B cell (primary cell): ENCODE measurements at regions of chr6 and their contacts with region 1.

Region 1: DNA sequence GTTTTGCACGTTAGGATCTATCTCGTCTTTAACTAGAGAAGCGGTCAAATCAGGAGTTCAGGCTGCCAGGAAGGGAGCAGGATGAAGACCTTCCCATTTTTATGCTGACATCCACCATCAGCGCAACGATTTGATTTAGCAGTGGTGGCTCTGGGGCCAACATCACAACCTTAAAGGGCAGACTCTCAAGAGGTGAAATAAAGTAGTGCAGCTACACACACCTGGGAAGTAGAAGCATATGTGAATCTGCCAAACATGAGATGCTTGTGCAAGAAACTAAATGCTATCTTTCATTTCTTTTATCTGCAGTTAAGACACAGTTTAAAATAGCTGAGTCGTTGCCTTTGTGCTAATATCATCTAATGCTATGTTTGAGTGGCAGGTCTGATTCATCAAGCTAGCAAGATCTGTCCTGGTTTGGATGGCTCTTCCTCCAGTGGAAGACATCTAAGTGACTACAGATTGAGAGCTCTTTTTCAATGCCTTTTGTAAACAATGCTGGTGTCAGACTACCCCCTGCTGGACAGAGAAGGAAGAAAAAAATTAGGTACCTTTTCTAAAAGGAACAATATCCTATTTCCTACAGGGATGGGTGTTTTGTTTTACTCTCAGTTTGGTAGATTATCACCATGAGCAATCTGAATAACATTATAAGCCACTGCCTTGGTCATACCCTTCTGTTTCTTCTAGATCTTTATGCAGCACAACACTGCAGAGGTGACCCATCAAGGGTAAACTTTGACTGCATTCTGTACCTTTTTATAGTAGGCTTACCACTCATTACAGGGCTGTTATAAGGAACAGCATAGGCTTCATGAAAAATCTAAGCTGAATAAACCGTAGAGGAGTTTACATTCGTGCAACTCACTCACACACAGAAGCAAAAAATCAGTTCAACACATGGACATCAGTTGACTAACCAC is 171.6 kb upstream of the FBXL4 start:
- DNase-seq: peak; percentile 44
- ATAC-seq: no peak
- H3K4me3 ChIP-seq: no peak overlapping the region
- H3K4me3 Mint-ChIP-seq: no peak overlapping the region
- H3K27ac ChIP-seq: no peak overlapping the region
- H3K27ac Mint-ChIP-seq: no peak overlapping the region
- H3K4me1 ChIP-seq: no peaks in the 10 kb centered on the region
- H3K4me1 Mint-ChIP-seq: no peaks in the 10 kb centered on the region
- H3K27me3 ChIP-seq: no peaks in the 10 kb centered on the region
- H3K27me3 Mint-ChIP-seq: peaks cover 35% of the 10 kb centered on the region
- CTCF ChIP-seq: peak; percentile 82

Region 2: GRCh38 chr6:97186416-97186999 is 1932.9 kb before region 1 on chr6:
- CTCF ChIA-PET with region 1: interaction called, 12 read pairs
- POLR2A ChIA-PET with region 1: no interaction called
- intact Hi-C with region 1: no loop called
- DNase-seq: peak; percentile 63
- ATAC-seq: peak; percentile 66
- H3K4me3 ChIP-seq: no peak overlapping the region
- H3K4me3 Mint-ChIP-seq: no peak overlapping the region
- H3K27ac ChIP-seq: no peak overlapping the region
- H3K27ac Mint-ChIP-seq: no peak overlapping the region
- H3K4me1 ChIP-seq: no peaks in the 10 kb centered on the region
- H3K4me1 Mint-ChIP-seq: no peaks in the 10 kb centered on the region
- H3K27me3 ChIP-seq: no peaks in the 10 kb centered on the region
- H3K27me3 Mint-ChIP-seq: no peaks in the 10 kb centered on the region
- CTCF ChIP-seq: peak; percentile 95

Region 3: DNA sequence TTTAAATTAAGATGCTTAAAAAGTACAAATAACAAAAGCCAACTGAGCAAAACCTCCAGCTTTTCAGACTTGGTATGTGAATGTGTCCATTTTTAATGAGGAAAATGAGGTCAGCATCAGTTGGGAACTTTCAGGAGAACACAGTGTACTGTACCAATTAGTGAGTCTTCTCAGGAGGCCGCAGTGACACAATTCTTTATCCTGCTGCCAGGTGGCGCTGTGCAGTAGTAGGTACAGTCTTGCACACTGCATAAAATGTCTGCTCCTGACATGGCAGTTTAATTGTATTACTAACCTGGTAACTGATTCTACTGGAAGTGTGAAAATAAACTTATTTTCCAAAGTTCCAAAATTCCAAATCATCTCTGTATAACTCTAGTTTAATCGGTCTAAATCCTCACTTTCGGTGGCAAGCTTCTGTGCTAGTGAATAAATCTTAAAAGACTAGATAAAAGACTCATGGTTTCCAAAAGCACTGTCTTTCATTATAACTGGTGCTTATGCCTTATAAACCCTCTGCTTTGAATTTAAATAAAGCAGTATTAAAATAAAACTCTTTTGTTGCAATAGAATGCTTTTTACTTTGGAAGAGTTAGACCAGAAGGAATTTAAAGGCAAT is 1621.5 kb before region 1 on chr6:
- CTCF ChIA-PET with region 1: interaction called, 38 read pairs
- POLR2A ChIA-PET with region 1: no interaction called
- intact Hi-C with region 1: loop called (anchors 1 kb)
- DNase-seq: peak; percentile 62
- ATAC-seq: peak; percentile 69
- H3K4me3 ChIP-seq: no peak overlapping the region
- H3K4me3 Mint-ChIP-seq: no peak overlapping the region
- H3K27ac ChIP-seq: no peak overlapping the region
- H3K27ac Mint-ChIP-seq: no peak overlapping the region
- H3K4me1 ChIP-seq: no peaks in the 10 kb centered on the region
- H3K4me1 Mint-ChIP-seq: no peaks in the 10 kb centered on the region
- H3K27me3 ChIP-seq: no peaks in the 10 kb centered on the region
- H3K27me3 Mint-ChIP-seq: peaks cover 14% of the 10 kb centered on the region
- CTCF ChIP-seq: peak; percentile 89

Region 4: DNA sequence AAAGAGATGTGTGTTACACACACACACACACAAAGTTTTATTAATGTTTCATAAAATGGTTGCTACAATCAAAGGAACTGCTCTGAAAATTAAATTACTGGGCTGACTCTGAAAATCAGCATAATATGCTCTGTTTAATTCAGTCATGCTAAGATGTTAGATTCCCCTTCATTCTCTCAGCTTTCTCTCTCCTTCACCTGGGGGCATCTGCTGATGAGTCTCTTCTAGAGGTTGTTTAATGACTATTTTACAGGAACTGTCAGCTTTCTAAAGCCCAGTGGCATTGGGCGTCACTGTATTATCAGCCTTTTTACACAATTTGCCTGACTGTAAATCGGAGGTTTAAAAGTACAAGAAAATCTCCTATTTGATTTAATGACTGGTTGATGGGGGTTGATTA is 844.7 kb before region 1 on chr6:
- CTCF ChIA-PET with region 1: no interaction called
- POLR2A ChIA-PET with region 1: no interaction called
- intact Hi-C with region 1: no loop called
- DNase-seq: no peak
- ATAC-seq: no peak
- H3K4me3 ChIP-seq: no peak overlapping the region
- H3K4me3 Mint-ChIP-seq: no peak overlapping the region
- H3K27ac ChIP-seq: no peak overlapping the region
- H3K27ac Mint-ChIP-seq: no peak overlapping the region
- H3K4me1 ChIP-seq: no peaks in the 10 kb centered on the region
- H3K4me1 Mint-ChIP-seq: no peaks in the 10 kb centered on the region
- H3K27me3 ChIP-seq: no peaks in the 10 kb centered on the region
- H3K27me3 Mint-ChIP-seq: no peaks in the 10 kb centered on the region
- CTCF ChIP-seq: no peak

Region 5: DNA sequence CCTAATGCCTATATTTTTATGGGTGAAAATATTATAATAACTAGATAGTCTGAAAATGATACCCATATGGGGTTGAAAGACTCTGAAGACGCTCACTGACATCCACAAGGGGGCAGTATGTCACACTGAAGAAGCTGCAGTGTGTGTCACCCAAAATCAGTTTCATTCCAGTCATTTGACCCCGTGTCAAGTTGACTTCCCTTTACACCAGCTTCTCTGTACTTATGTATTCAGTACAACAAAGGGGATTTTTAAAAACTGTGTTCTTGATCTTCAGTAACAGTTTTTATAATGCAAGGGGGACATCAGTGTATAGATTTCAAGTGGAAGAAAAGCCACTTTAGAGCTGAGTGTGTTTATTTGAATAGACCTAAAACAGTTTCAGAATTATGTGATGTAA is 210.8 kb after region 1 on chr6:
- CTCF ChIA-PET with region 1: no interaction called
- POLR2A ChIA-PET with region 1: no interaction called
- intact Hi-C with region 1: no loop called
- DNase-seq: peak; percentile 72
- ATAC-seq: peak; percentile 76
- H3K4me3 ChIP-seq: no peak overlapping the region
- H3K4me3 Mint-ChIP-seq: no peak overlapping the region
- H3K27ac ChIP-seq: no peak overlapping the region
- H3K27ac Mint-ChIP-seq: no peak overlapping the region
- H3K4me1 ChIP-seq: peaks cover 0 to 3% of the 10 kb centered on the region in 2 donors
- H3K4me1 Mint-ChIP-seq: peaks cover 12% of the 10 kb centered on the region
- H3K27me3 ChIP-seq: peaks cover 0 to 2% (median 1%) of the 10 kb centered on the region in 4 experiments
- H3K27me3 Mint-ChIP-seq: no peaks in the 10 kb centered on the region
- CTCF ChIP-seq: peak; percentile 89

Region 6: GRCh38 chr6:99490608-99491007 is 371.2 kb after region 1 on chr6:
- CTCF ChIA-PET with region 1: no interaction called
- POLR2A ChIA-PET with region 1: no interaction called
- intact Hi-C with region 1: no loop called
- DNase-seq: no peak
- ATAC-seq: no peak
- H3K4me3 ChIP-seq: no peak overlapping the region
- H3K4me3 Mint-ChIP-seq: no peak overlapping the region
- H3K27ac ChIP-seq: no peak overlapping the region
- H3K27ac Mint-ChIP-seq: no peak overlapping the region
- H3K4me1 ChIP-seq: peaks cover 7 to 12% of the 10 kb centered on the region in 2 donors
- H3K4me1 Mint-ChIP-seq: peaks cover 17% of the 10 kb centered on the region
- H3K27me3 ChIP-seq: no peaks in the 10 kb centered on the region
- H3K27me3 Mint-ChIP-seq: no peaks in the 10 kb centered on the region
- CTCF ChIP-seq: no peak

Region 7: GRCh38 chr6:99512033-99512432 is 392.7 kb after region 1 on chr6:
- CTCF ChIA-PET with region 1: no interaction called
- POLR2A ChIA-PET with region 1: no interaction called
- intact Hi-C with region 1: no loop called
- DNase-seq: no peak
- ATAC-seq: no peak
- H3K4me3 ChIP-seq: no peak overlapping the region
- H3K4me3 Mint-ChIP-seq: no peak overlapping the region
- H3K27ac ChIP-seq: no peak overlapping the region
- H3K27ac Mint-ChIP-seq: peak overlapping the region; percentile 34
- H3K4me1 ChIP-seq: peaks cover 14 to 15% of the 10 kb centered on the region in 2 donors
- H3K4me1 Mint-ChIP-seq: peaks cover 34% of the 10 kb centered on the region
- H3K27me3 ChIP-seq: no peaks in the 10 kb centered on the region
- H3K27me3 Mint-ChIP-seq: no peaks in the 10 kb centered on the region
- CTCF ChIP-seq: no peak